ENCODE measurements at regions of chr1 and their contacts with region 1.

Region 1: DNA sequence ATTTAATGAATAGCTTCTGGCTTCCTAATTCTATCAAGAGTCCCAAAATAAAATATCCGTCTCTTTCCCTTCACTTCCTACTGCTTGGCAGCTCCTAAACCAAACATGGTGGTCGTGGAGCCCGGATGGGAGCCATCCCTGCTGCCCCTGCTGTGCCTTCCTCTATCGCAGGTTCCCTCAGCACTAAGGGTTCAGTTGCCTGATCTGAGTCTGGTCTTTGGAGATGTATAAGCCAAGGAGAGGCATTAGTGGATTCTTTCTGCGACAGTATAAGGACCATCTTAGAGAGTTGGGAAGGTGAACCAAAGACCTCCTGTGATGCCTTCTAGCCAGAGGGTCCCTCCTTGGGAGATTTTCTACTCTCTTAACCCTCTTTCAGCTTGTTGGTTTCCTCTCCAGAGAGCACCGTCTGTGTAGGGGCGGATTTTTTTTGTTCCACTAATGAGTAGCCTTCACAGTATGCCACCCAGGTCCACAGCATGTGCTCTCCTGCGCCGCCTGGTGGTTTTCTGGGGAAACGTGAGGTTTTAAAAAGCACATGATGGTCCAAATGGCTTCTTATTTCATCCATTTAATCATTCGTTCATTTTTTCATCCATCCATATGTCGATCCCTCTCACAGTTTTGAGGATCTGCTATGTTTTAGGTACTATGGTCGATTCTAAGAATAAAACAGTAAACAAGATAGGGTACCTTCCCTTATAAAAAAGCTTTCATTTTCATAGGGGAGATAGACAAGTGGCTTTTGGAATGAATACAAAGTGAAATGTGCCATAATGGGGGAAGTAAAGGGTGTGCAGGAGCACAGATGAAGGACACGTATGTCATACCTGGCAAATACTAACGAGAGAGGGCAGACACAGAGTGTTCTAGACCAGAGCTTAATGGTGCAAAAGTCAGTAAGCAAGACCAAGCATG is 71.0 kb downstream of the NFASC start:
- DNase-seq: peak; percentile 82
- H3K4me3 Mint-ChIP-seq: no peak overlapping the region
- H3K27ac Mint-ChIP-seq: no peak overlapping the region
- H3K4me1 Mint-ChIP-seq: no peaks in the 10 kb centered on the region
- H3K27me3 Mint-ChIP-seq: peaks cover 10% of the 10 kb centered on the region
- CTCF ChIP-seq: peak; percentile 95

Region 2: DNA sequence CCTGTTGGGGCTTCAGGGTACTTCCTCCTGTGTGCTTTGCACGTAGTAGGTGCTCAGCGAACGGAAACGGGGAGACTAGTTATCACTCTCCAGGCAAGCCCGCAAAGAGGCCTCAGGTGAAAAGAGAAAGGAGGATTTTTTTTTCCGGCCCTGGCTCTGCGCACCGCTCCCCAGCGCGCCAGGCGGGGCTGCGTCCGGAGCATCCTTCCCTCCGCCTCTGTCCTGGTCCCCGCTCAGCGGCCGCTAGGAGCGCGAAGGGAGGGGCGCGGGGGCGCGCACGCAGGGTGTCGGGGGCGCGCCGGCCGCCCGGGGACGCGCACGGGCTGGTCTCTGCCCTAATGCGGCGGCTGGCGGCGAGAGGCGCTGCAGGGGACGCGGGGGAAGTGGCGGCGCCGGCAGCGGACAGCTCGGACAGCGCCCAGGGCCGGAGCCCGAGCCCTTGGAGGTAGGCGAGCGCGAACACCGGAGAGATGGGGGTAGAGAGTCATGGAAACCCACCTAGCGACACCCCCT is 113.3 kb before region 1 on chr1:
- CTCF ChIA-PET with region 1: interaction called, 14 read pairs
- POLR2A ChIA-PET with region 1: interaction called, 3 read pairs
- intact Hi-C with region 1: loop called (anchors 1 kb)
- DNase-seq: no peak
- H3K4me3 Mint-ChIP-seq: no peak overlapping the region
- H3K27ac Mint-ChIP-seq: no peak overlapping the region
- H3K4me1 Mint-ChIP-seq: no peaks in the 10 kb centered on the region
- H3K27me3 Mint-ChIP-seq: peaks cover 79% of the 10 kb centered on the region
- CTCF ChIP-seq: no peak

Region 3: GRCh38 chr1:204902671-204903070 is 39.0 kb before region 1 on chr1:
- CTCF ChIA-PET with region 1: interaction called, 11 read pairs
- POLR2A ChIA-PET with region 1: no interaction called
- intact Hi-C with region 1: no loop called
- DNase-seq: no peak
- H3K4me3 Mint-ChIP-seq: no peak overlapping the region
- H3K27ac Mint-ChIP-seq: no peak overlapping the region
- H3K4me1 Mint-ChIP-seq: no peaks in the 10 kb centered on the region
- H3K27me3 Mint-ChIP-seq: peaks cover 92% of the 10 kb centered on the region
- CTCF ChIP-seq: no peak

Region 4: GRCh38 chr1:204924013-204924967 is 17.4 kb before region 1 on chr1:
- CTCF ChIA-PET with region 1: interaction called, 35 read pairs
- POLR2A ChIA-PET with region 1: interaction called, 3 read pairs
- intact Hi-C with region 1: no loop called
- DNase-seq: no peak
- H3K4me3 Mint-ChIP-seq: no peak overlapping the region
- H3K27ac Mint-ChIP-seq: no peak overlapping the region
- H3K4me1 Mint-ChIP-seq: peaks cover 7% of the 10 kb centered on the region
- H3K27me3 Mint-ChIP-seq: no peaks in the 10 kb centered on the region
- CTCF ChIP-seq: no peak

Region 5: DNA sequence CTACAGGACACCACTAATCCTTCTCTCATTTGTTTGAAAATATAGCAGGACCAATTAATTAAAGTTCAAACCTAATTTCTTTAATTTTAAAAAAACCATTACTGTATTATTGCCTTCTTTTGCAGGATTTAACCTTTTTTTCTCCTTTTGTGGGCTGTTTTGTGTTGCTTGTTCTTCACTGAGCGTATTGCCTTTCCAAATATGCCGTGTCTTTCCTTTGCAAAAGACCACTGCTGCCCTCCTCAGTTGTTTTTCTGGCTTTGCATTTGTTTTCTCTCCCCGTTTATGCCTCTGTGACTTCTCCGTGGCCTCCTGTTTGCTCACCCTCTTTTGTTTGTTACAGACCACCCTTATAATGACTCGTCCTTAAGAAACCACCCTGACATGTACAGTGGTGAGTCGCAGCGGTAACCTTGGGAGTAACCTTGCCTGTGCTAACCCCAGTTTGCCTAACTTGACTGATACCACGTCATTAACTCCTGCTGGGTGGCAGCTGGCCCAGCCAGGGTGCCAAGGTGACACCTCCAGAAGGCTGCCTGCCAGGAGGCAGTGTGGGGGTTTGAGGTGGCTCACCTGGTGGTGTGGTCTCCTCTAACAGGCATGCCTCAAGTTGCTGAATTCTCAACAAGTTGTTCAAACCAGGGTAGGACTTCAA is 20.2 kb after region 1 on chr1:
- CTCF ChIA-PET with region 1: interaction called, 11 read pairs
- POLR2A ChIA-PET with region 1: interaction called, 3 read pairs
- intact Hi-C with region 1: no loop called
- DNase-seq: no peak
- H3K4me3 Mint-ChIP-seq: no peak overlapping the region
- H3K27ac Mint-ChIP-seq: no peak overlapping the region
- H3K4me1 Mint-ChIP-seq: no peaks in the 10 kb centered on the region
- H3K27me3 Mint-ChIP-seq: peaks cover 91% of the 10 kb centered on the region
- CTCF ChIP-seq: no peak

Region 6: DNA sequence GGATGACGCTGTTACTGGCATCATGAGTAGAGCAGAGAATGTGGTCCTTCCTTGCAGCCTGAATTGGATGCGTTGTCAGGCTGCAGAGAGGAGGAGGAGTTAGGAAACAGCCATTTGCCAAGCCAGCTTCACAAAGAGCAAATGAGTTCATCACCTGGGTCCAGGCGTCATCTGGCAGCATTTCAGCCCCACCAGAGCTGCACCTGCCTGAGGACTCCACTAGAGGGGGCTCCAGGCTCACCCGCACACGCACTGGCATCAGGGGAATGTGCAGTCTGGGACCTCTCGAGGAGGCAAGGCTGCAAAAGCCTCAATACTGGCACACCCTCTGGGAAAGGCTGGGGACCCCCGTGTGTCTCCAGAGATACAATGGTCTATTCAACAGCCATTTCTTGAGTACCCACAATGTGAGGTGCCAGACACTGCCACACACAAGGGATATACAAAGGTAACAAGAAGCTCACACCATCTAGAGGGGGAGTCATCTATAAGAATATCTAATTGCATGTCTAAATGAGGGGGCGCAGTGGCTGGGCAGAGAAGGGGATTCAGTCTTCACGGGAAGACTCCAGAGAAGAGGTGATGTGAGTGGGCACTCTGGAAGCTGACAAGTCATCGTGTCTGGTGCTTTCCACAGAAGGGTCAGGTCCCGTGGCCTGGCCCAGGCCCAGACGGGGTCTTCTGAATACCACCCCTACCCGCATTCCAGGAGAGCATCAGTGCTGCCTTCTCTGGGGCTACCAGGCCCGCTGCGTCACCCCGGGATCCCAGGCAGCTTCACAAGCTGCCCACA is 47.8 kb after region 1 on chr1:
- CTCF ChIA-PET with region 1: interaction called, 12 read pairs
- POLR2A ChIA-PET with region 1: no interaction called
- intact Hi-C with region 1: no loop called
- DNase-seq: peak; percentile 91
- H3K4me3 Mint-ChIP-seq: no peak overlapping the region
- H3K27ac Mint-ChIP-seq: no peak overlapping the region
- H3K4me1 Mint-ChIP-seq: no peaks in the 10 kb centered on the region
- H3K27me3 Mint-ChIP-seq: peaks cover 99% of the 10 kb centered on the region
- CTCF ChIP-seq: peak; percentile 100